Dendritic cell treated with granulocyte-macrophage colony-stimulating factor and Interleukin-4, amounts not matched to agents 40 ng/mL and 50 ng/mL, for 4 days (primary cell): ENCODE measurements at regions of chr17 and their contacts with region 1.

Region 1: GRCh38 chr17:51000835-51001638 is 119.6 kb downstream of the SPAG9 start:
- H3K4me3 Mint-ChIP-seq: no peak overlapping the region
- H3K27ac Mint-ChIP-seq: no peak overlapping the region
- H3K4me1 Mint-ChIP-seq: no peaks in the 10 kb centered on the region
- H3K27me3 Mint-ChIP-seq: no peaks in the 10 kb centered on the region

Region 2: GRCh38 chr17:51056813-51057510 is 55.9 kb after region 1 on chr17:
- intact Hi-C with region 1: loop called (anchors 1 kb)
- H3K4me3 Mint-ChIP-seq: no peak overlapping the region
- H3K27ac Mint-ChIP-seq: peak overlapping the region; percentile 80
- H3K4me1 Mint-ChIP-seq: peaks cover 14% of the 10 kb centered on the region
- H3K27me3 Mint-ChIP-seq: no peaks in the 10 kb centered on the region